ENCODE measurements at regions of chr19 and their contacts with region 1.

Region 1: DNA sequence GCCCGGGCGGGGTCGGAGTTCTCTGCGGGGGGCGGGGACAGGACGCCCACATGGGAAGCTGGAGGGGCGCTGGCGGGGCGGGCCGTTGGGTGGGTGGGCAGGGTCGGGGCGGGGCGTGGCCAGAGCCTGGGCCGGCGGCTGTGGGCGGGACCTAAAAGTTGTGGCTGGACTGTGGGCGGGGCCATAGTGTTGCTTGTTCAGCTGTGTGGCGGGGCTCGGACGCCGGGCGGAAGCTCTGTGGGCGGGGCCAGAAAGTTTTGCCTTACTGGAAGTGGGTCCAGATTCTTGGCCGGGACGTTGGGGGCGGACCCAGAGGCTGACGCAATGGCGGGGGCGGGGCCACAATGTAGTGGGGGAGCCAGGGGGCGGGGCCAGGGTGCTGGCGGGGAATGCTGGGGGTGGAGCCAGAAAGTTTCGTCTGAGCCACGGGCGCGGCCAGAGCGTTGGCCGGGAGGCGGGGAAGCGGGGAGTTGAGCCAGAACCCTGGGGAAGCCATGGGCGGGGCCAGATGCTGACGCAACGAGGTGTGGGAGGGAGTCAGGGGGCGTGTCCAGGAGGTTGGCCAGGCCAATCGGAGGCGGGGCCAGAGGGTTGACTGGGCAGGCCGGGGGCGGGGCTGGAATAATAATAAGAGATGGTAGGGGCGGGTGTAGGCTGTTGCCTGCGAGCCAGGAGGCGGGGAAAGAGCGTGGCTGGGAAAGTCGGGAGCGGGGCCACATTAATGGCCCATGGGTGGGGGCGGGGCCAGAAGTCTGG is 541 bp downstream of the CCDC9 start:
- DNase-seq: peak; percentile 95
- ATAC-seq: peak; percentile 78
- H3K4me3 ChIP-seq: peak overlapping the region; percentile 72 to 88 (median 88); a peak in 4 of 6 replicates
- H3K27ac ChIP-seq: peak overlapping the region; percentile 86
- H3K4me1 ChIP-seq: peaks cover 43% of the 10 kb centered on the region
- H3K27me3 ChIP-seq: no peaks in the 10 kb centered on the region
- CTCF ChIP-seq: no peak
- EP300 ChIP-seq: no peak
- POLR2A ChIP-seq: no peak
- RAD21 ChIP-seq: no peak

Region 2: DNA sequence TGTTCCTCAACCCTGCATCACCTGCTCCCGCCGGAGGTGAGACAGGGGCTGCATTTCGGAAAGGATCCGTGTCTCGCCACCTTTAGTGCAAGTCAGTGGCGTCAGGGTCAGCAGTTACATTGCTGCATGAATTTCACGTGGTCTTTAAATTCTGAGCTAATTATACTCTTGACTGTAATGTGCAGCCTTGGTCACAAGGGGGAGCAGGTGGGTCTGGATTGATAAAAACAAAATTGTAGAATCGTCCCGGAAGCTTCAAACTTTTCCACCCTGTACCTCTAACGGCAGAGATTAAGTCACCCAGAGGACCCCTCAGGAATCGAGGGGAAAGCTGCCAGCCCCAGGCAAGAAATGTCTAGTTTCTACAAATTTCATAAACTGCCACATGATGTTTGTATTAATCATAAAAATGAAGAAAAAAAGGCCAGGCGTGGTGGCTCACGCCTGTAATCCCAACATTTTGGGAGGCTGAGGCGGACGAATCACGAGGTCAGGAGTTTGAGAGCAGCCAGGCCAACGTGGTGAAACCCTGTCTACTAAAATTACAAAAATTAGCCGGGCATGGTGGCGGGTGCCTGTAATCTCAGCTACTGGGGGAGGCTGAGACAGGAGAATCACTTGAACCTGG is 46.1 kb before region 1 on chr19:
- CTCF ChIA-PET with region 1: no interaction called
- POLR2A ChIA-PET with region 1: interaction called, 8 read pairs
- in situ Hi-C with region 1: loop called (anchors 5 kb)
- intact Hi-C with region 1: no loop called
- DNase-seq: peak; percentile 71
- ATAC-seq: peak; percentile 52
- H3K4me3 ChIP-seq: no peak overlapping the region
- H3K27ac ChIP-seq: peak overlapping the region; percentile 55
- H3K4me1 ChIP-seq: peaks cover 11% of the 10 kb centered on the region
- H3K27me3 ChIP-seq: no peaks in the 10 kb centered on the region
- CTCF ChIP-seq: peak; percentile 80
- EP300 ChIP-seq: no peak
- POLR2A ChIP-seq: 0 out of 4 replicates have a peak, but pooled peaks of 1 of the 2 experiments have one; percentile 16
- RAD21 ChIP-seq: peak; percentile 68

Region 3: DNA sequence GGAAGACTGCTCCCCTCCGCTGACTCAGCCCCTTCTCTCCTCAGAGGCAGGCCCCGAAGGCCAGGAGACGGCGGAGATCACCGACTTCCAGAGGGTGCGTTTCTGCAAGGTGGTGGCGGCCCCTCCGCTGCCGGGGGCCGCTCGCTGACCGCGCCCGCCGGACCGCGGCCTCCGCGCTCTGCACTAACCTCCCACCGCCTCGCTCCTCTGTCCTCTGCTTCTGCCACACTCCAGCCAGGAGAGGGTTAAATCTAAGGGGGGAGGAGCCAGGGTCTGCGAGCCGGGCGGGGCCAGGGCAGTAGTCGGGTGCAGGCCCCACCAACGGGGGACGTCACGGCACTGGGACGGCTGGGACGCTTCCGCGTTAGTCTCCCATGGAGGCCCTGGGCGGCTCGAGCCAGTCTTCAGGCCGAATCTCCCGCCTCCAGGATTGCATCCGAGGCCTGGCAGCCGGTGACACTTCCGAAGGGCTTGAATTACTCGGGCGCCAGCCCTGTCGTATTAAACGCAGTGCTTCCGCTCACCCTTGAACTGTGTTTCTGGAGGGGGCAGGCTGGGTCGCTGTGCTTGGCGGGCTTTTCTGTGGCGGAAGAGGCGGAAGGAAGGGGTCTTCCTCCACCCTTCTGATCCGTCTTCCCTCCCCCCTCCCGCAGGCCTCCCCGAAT is 16.6 kb after region 1 on chr19:
- CTCF ChIA-PET with region 1: no interaction called
- POLR2A ChIA-PET with region 1: interaction called, 57 read pairs
- in situ Hi-C with region 1: no loop called
- intact Hi-C with region 1: loop called (anchors 1 kb)
- DNase-seq: peak; percentile 84
- ATAC-seq: peak; percentile 89
- H3K4me3 ChIP-seq: peak overlapping the region; percentile 73 to 85 (median 75)
- H3K27ac ChIP-seq: peak overlapping the region; percentile 98
- H3K4me1 ChIP-seq: peaks cover 24% of the 10 kb centered on the region
- H3K27me3 ChIP-seq: no peaks in the 10 kb centered on the region
- CTCF ChIP-seq: no peak
- EP300 ChIP-seq: no peak
- POLR2A ChIP-seq: peak in 1 of 2 experiments; percentile 55; a peak in 3 of 4 replicates
- RAD21 ChIP-seq: peak; percentile 18; the same call in 1 of the 2 replicates

Region 4: GRCh38 chr19:47296036-47296435 is 39.2 kb after region 1 on chr19:
- CTCF ChIA-PET with region 1: no interaction called
- POLR2A ChIA-PET with region 1: no interaction called
- in situ Hi-C with region 1: no loop called
- intact Hi-C with region 1: no loop called
- DNase-seq: peak; percentile 76
- ATAC-seq: peak; percentile 89
- H3K4me3 ChIP-seq: no peak overlapping the region
- H3K27ac ChIP-seq: no peak overlapping the region
- H3K4me1 ChIP-seq: no peaks in the 10 kb centered on the region
- H3K27me3 ChIP-seq: no peaks in the 10 kb centered on the region
- CTCF ChIP-seq: peak; percentile 88
- EP300 ChIP-seq: no peak
- POLR2A ChIP-seq: no peak
- RAD21 ChIP-seq: peak; percentile 84